Uterus (tissue), 4 donors: ENCODE measurements at regions of chr6 and their contacts with region 1.

Region 1: GRCh38 chr6:111709615-111710398 is 104.1 kb upstream of the TRAF3IP2 start:
- DNase-seq: peak; percentile 75 to 86
- H3K4me3 ChIP-seq: no peak overlapping the region
- H3K27ac ChIP-seq: peak overlapping the region; percentile 62 to 76
- H3K4me1 ChIP-seq: no peaks in the 10 kb centered on the region
- H3K27me3 ChIP-seq: no peaks in the 10 kb centered on the region
- CTCF ChIP-seq: peak; percentile 64 to 89 (median 79)
- POLR2A ChIP-seq: no peak

Region 2: DNA sequence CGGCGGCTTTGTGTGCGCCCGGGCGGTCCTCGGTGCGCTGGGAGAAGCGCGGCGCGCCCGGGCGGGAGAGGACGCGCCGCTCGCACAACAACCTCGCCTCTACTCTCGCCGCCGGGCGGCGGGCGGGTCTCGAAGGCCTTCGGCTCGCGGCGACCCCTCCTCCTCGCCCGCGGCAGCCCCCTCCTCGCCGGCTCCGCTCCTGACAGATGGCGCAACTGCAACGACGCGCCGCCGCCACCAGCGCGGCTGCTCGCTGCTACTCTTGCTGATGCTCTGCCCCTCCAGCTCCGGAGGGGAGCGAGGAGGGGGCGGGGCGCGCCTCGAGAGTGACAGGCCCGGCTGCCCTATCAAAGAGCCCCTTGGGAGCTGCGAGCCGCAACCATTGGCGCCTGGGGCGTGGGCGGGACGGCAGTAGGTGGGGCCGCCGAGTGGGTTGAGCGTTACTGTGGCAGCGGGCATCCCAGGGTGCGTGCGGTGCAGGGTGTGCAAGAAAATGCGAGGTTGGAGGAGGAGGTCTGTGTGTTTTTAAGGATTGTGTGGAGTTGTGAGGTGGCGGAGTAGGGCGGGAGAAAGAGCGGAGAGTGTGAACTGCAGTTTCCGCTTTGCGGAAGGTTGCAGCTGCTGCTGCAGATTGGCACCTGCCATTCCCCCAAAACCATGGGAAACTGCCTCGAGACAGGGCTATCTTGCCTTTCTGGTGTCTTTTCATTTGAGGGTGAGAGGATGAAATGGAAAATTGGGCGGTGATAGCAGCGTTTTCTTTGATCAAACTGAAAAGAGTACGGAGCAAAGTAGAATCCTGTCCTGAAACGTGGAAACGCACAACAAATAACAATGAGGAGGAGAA is 163.6 kb after region 1 on chr6 and contains the start of gene FYN:
- intact Hi-C with region 1: loop called (anchors 10 kb)
- DNase-seq: peak; percentile 98
- H3K4me3 ChIP-seq: peak within 1 kb of the TSS; percentile 79 to 90
- H3K27ac ChIP-seq: peak within 1 kb of the TSS; percentile 89 to 95
- H3K4me1 ChIP-seq: peaks cover 0 to 5% of the 10 kb centered on the region in 2 donors
- H3K27me3 ChIP-seq: no peaks in the 10 kb centered on the region
- CTCF ChIP-seq: peak; percentile 20 to 79 (median 46)
- POLR2A ChIP-seq: peak; percentile 98 to 99
- total RNA-seq, gene FYN: 50.7 to 208 (median 135) TPM

Region 3: DNA sequence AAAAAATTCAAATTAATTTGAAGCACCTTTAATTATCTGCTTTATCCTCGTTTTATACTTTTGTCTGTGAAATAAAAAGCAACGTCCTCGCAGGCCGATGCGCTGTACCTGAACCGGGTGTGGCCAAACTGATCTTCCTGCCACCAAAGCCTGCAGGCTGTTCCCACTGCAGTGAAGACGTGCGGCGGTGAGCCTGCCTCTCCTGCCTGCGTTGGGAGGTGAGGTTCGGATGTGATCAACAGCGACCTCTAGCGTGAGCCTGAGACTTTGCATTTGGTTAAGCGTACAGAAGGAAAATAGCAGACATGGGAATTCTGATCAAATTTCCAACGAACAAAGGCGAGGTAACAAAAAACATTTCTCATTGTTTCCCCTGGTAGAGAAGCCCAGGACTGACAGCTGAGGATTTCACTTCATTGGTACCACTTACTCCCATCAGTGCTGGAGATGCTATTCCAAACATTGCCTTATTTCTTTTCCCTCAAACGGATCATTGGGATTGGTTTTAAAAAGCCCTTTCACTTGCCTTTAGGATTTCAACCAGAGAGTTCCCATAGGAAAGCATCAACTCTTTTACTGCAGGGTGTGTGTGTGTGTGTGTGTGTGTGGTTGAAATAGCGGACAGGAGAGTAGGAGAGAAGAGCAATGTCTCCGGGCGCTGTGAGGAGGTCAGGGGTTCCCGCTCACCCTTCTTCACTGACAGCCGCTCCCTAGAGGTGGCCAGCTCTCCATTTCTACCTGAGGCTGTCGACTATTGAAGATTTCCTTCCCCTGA is 287.5 kb after region 1 on chr6:
- intact Hi-C with region 1: loop called (anchors 2 kb)
- DNase-seq: peak; percentile 83 to 86
- H3K4me3 ChIP-seq: peak overlapping the region in 1 of 2 donors; percentile 7
- H3K27ac ChIP-seq: peak overlapping the region; percentile 47 to 74
- H3K4me1 ChIP-seq: no peaks in the 10 kb centered on the region
- H3K27me3 ChIP-seq: no peaks in the 10 kb centered on the region
- CTCF ChIP-seq: peak; percentile 86 to 96 (median 92)
- POLR2A ChIP-seq: peak in 1 of 2 donors; percentile 10

Region 4: DNA sequence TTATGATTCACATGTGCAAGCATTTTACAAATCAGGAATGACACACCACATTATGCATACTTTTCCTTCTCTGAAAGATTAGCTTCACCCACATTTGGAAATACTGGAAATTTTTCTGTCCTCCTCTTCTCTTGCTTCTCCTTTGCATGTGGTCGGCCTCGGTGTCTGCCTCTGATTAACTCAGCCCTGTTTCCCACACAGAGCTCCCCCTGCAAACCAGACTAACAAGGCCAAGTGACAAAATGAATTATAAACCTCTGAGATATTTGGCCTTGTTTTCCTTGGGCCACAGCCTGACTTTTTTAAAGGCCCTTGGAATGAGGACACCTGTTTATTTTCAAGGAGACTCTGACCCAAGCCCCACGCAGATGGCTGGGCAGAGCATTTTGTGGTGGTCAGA is 335.0 kb after region 1 on chr6:
- intact Hi-C with region 1: loop called (anchors 5 kb)
- DNase-seq: peak; percentile 45 to 61
- H3K4me3 ChIP-seq: no peak overlapping the region
- H3K27ac ChIP-seq: peak overlapping the region; percentile 82 to 86
- H3K4me1 ChIP-seq: peaks cover 0 to 13% of the 10 kb centered on the region in 2 donors
- H3K27me3 ChIP-seq: no peaks in the 10 kb centered on the region
- CTCF ChIP-seq: no peak
- POLR2A ChIP-seq: no peak

Region 5: GRCh38 chr6:112081569-112081968 is 371.8 kb after region 1 on chr6:
- intact Hi-C with region 1: no loop called
- DNase-seq: no peak
- H3K4me3 ChIP-seq: no peak overlapping the region
- H3K27ac ChIP-seq: no peak overlapping the region
- H3K4me1 ChIP-seq: peaks cover 0 to 3% of the 10 kb centered on the region in 2 donors
- H3K27me3 ChIP-seq: no peaks in the 10 kb centered on the region
- CTCF ChIP-seq: no peak
- POLR2A ChIP-seq: no peak